ENCODE measurements at regions of chr10 and their contacts with region 1.

Region 1: GRCh38 chr10:84374455-84374854 is 46.1 kb downstream of the CCSER2 start:
- DNase-seq: no peak
- H3K4me3 ChIP-seq: no peak overlapping the region
- H3K27ac ChIP-seq: no peak overlapping the region
- H3K4me1 ChIP-seq: peaks cover 0 to 17% (median 3%) of the 10 kb centered on the region in 4 donors
- H3K27me3 ChIP-seq: no peaks in the 10 kb centered on the region
- CTCF ChIP-seq: no peak
- EP300 ChIP-seq: no peak
- POLR2A ChIP-seq: no peak

Region 2: DNA sequence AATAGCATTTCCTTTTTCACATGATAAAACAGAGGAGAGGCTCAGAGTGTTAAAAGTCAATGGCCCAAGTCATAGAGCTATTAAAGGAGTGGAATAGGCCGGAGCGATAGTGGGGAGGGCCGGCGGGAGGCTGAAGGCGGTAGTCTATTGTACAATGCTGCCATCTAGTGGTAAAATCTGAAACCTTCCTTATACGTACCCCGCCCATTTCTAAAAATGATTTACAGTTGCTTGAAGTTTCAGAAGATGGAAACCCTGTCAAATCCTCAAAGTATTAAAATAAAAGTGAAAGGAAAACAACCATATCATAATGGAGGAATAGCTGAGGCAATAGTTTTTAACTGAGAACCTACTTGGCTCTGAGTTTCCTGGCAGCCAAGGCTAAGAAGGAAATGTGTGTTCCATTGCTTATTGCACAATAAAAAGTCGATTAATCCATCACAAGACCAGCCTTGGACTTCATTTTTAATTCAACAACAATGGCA is 163.0 kb after region 1 on chr10:
- intact Hi-C with region 1: loop called (anchors 5 kb)
- DNase-seq: peak; percentile 59 to 85
- H3K4me3 ChIP-seq: no peak overlapping the region
- H3K27ac ChIP-seq: no peak overlapping the region
- H3K4me1 ChIP-seq: peaks cover 6 to 13% (median 11%) of the 10 kb centered on the region in 4 donors
- H3K27me3 ChIP-seq: peaks cover 0 to 40% (median 0%) of the 10 kb centered on the region in 3 donors
- CTCF ChIP-seq: peak in 5 of 7 experiments; percentile 43 to 88 (median 82)
- EP300 ChIP-seq: no peak
- POLR2A ChIP-seq: no peak

Measured in stomach (tissue), 19 donors.